Activated CD8-positive, alpha-beta T cell treated with anti-CD3 and anti-CD28 coated beads, Interleukin-2, amount 10 ng/mL, durations not matched to agents 7 days and 5 days (primary cell): ENCODE measurements at regions of chr2 and their contacts with region 1.

Region 1: DNA sequence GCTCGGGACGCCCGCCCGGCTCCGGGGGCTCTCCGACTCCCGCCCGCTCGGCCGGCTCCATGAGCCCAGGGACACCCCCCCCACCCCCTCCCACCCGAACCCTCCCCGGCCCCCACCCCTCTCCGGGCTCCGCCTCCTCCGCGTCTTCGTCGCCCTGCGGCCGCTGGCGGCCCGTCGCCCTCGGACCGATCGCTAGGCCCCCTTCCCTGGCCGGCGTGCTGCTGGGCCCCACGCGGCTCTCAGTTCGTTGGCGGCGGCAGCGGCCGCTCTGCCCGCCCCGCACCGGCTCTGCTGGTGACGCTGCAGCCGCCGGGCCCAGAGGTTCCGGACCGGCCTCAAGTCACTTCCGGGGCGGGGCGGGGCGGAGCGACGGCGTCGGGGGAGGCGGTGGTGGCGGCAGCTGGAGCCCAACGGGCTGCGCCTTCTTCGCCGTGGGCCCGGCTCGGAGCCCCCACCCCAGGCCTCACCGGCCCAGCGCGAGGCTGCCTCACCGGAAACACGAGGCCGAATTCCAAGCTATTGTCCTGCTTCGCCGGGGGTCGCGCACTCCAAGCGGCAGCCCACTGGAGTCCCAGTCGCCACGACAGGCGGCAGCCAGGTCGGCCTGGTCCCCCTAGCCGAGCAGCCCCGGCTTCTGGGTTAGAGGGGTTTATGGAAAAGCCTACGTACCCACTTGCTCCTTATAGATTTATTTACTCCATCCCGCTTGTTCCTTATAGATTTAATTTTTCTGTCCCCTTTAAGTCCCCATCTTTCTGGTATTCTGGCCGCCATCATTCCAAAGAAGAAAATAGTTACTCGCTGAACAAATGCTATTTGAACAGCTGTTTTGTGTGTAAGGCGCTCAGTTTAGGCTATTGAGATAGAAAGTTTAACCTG is at the start of gene PSME4:
- DNase-seq: peak; percentile 95
- ATAC-seq: peak; percentile 92
- H3K4me3 Mint-ChIP-seq: peak within 1 kb of the TSS; percentile 92
- H3K27ac Mint-ChIP-seq: peak within 1 kb of the TSS; percentile 98
- H3K4me1 Mint-ChIP-seq: peaks cover 34% of the 10 kb centered on the region
- H3K27me3 Mint-ChIP-seq: no peaks in the 10 kb centered on the region
- total RNA-seq, gene PSME4: 55.3 to 56.8 TPM

Region 2: GRCh38 chr2:53880756-53881155 is 90.2 kb before region 1 on chr2:
- CTCF ChIA-PET with region 1: no interaction called
- POLR2A ChIA-PET with region 1: no interaction called
- DNase-seq: no peak
- ATAC-seq: no peak
- H3K4me3 Mint-ChIP-seq: no peak overlapping the region
- H3K27ac Mint-ChIP-seq: no peak overlapping the region
- H3K4me1 Mint-ChIP-seq: no peaks in the 10 kb centered on the region
- H3K27me3 Mint-ChIP-seq: no peaks in the 10 kb centered on the region

Region 3: GRCh38 chr2:53960476-53960875 is 10.5 kb before region 1 on chr2:
- CTCF ChIA-PET with region 1: interaction called, 3 read pairs
- POLR2A ChIA-PET with region 1: interaction called, 13 read pairs
- DNase-seq: no peak
- ATAC-seq: no peak
- H3K4me3 Mint-ChIP-seq: no peak overlapping the region
- H3K27ac Mint-ChIP-seq: no peak overlapping the region
- H3K4me1 Mint-ChIP-seq: peaks cover 34% of the 10 kb centered on the region
- H3K27me3 Mint-ChIP-seq: no peaks in the 10 kb centered on the region

Region 4: GRCh38 chr2:53985646-53986045 is 14.7 kb after region 1 on chr2:
- CTCF ChIA-PET with region 1: interaction called, 3 read pairs
- POLR2A ChIA-PET with region 1: interaction called, 11 read pairs
- DNase-seq: no peak
- ATAC-seq: no peak
- H3K4me3 Mint-ChIP-seq: no peak overlapping the region
- H3K27ac Mint-ChIP-seq: no peak overlapping the region
- H3K4me1 Mint-ChIP-seq: peaks cover 9% of the 10 kb centered on the region
- H3K27me3 Mint-ChIP-seq: no peaks in the 10 kb centered on the region

Region 5: GRCh38 chr2:53994818-53995808 is 24.1 kb after region 1 on chr2:
- CTCF ChIA-PET with region 1: interaction called, 4 read pairs
- POLR2A ChIA-PET with region 1: interaction called, 25 read pairs
- DNase-seq: no peak
- ATAC-seq: peak; percentile 97
- H3K4me3 Mint-ChIP-seq: peak overlapping the region; percentile 39
- H3K27ac Mint-ChIP-seq: peak overlapping the region; percentile 84
- H3K4me1 Mint-ChIP-seq: peaks cover 26% of the 10 kb centered on the region
- H3K27me3 Mint-ChIP-seq: no peaks in the 10 kb centered on the region